ENCODE measurements at regions of chr12 and their contacts with region 1.

Region 1: DNA sequence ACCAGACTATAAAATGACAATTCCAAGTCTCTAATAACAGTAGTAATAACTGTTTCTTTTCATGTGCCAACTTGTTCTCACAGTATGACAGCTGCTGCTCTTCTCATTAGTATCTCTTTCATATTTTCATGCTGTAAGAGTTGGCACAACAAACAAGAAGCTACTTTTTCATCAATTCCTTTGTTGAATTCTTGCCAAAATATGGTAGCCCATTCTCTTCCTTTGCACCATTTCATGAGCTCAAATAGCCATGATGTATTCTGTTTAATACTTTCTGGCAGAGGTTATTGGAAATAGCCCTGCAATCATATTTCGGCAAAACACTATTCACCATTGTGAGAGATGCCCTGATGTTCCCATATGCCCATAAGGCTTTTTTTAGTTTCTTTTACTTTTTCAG is 1100.7 kb downstream of the TRHDE start:
- DNase-seq: no peak
- ATAC-seq: no peak
- H3K4me3 ChIP-seq: no peak overlapping the region
- H3K27ac ChIP-seq: no peak overlapping the region
- H3K4me1 ChIP-seq: no peaks in the 10 kb centered on the region
- H3K27me3 ChIP-seq: no peaks in the 10 kb centered on the region
- CTCF ChIP-seq: no peak

Region 2: DNA sequence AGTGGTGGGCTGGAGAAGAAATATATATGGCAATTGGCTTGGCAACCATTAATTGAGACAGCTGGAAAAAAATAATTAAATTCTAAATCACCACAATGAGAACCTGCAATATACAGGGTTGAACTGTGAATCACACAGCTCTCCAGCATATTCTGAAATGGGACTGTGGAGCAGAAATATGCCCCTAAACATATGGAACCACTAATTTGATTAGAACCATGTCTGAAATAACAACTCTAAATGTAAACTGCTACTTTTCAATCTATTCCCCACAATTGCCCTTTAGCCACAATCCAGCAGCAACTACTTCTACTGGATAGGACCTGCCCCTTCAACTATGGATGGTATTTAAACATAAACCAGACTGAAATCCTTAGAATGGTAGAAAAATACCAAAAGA is 770.3 kb before region 1 on chr12:
- intact Hi-C with region 1: loop called in 1 of 10 experiments (anchors 5 kb)
- DNase-seq: no peak
- ATAC-seq: no peak
- H3K4me3 ChIP-seq: no peak overlapping the region
- H3K27ac ChIP-seq: no peak overlapping the region
- H3K4me1 ChIP-seq: no peaks in the 10 kb centered on the region
- H3K27me3 ChIP-seq: no peaks in the 10 kb centered on the region
- CTCF ChIP-seq: no peak

Region 3: GRCh38 chr12:73486256-73486655 is 113.4 kb after region 1 on chr12:
- intact Hi-C with region 1: no loop called
- DNase-seq: no peak
- ATAC-seq: no peak
- H3K4me3 ChIP-seq: no peak overlapping the region
- H3K27ac ChIP-seq: no peak overlapping the region
- H3K4me1 ChIP-seq: no peaks in the 10 kb centered on the region
- H3K27me3 ChIP-seq: no peaks in the 10 kb centered on the region
- CTCF ChIP-seq: no peak

Region 4: GRCh38 chr12:74292351-74293194 is 919.7 kb after region 1 on chr12:
- intact Hi-C with region 1: no loop called
- DNase-seq: no peak
- ATAC-seq: no peak
- H3K4me3 ChIP-seq: no peak overlapping the region
- H3K27ac ChIP-seq: no peak overlapping the region
- H3K4me1 ChIP-seq: no peaks in the 10 kb centered on the region
- H3K27me3 ChIP-seq: no peaks in the 10 kb centered on the region
- CTCF ChIP-seq: no peak

Measured in heart right ventricle (tissue), 16 donors.